Heart right ventricle (tissue), 16 donors: ENCODE measurements at regions of chr9 and their contacts with region 1.

Region 1: DNA sequence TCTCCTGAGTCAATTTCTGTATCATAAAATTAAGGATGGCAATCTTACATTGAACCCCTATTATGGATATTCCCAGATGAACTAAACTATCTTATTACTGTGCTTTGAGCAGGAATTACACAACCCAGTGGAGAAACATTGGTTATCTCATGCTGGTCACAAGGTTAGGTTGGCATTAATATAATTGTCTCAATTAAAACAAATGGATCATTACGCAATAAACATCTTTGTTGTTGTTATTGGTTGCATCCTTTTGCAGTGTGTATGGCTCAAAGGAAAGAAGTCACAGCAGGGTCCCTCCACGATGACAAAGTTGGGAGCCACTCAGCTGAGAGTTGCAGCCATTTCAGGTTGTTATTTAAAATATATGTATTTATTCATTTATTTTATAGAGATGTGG is 297.0 kb upstream of the KLF4 start:
- DNase-seq: no peak
- ATAC-seq: no peak
- H3K4me3 ChIP-seq: no peak overlapping the region
- H3K27ac ChIP-seq: no peak overlapping the region
- H3K4me1 ChIP-seq: peaks cover 2 to 28% (median 10%) of the 10 kb centered on the region in 9 donors
- H3K27me3 ChIP-seq: no peaks in the 10 kb centered on the region
- CTCF ChIP-seq: no peak

Region 2: DNA sequence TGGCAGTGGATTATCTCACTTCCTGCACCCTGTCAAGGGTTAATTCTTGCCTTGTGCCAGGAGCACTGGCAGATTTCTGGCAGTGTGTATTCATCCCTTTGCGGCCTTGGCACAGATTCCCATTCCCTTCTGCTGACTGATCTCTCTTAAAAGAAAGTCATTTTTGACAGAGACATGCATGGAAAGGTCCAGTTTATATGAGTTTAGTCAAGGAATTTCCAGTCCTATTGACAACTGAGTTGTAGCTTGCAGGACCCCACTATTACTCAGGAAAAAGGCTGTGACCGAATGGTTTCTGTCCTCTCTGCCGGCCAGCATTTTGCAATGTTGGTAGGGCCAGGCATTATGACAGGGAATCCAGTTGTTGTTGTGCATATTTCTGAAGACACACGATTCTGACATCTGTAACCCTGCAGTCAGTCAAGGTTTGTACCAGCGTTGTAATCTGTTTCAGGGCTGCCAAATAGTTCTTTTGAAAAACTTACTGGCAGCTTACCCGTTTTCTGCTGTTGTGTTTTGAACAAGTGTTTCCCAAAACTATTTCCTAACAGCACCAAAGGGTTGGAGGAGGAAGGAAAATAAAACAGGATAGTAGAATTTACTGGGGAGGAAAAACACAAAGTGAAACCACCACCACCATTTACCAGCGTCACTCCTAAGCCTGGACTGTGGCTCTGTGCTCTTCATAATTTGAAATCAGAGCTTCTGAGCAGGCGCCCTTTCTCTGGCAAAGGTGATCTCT is 53.6 kb before region 1 on chr9:
- intact Hi-C with region 1: loop called in 1 of 10 experiments (anchors 2 kb)
- DNase-seq: peak in 1 of 2 donors; percentile 49
- ATAC-seq: peak; percentile 50 to 81 (median 68)
- H3K4me3 ChIP-seq: peak overlapping the region in 8 of 10 donors; percentile 0 to 38 (median 18)
- H3K27ac ChIP-seq: peak overlapping the region; percentile 63 to 95 (median 84)
- H3K4me1 ChIP-seq: peaks cover 3 to 42% (median 28%) of the 10 kb centered on the region in 9 donors
- H3K27me3 ChIP-seq: no peaks in the 10 kb centered on the region
- CTCF ChIP-seq: no peak

Region 3: GRCh38 chr9:107954312-107954711 is 167.8 kb after region 1 on chr9:
- intact Hi-C with region 1: no loop called
- DNase-seq: no peak
- ATAC-seq: peak in 3 of 8 donors; percentile 47 to 75 (median 56)
- H3K4me3 ChIP-seq: no peak overlapping the region
- H3K27ac ChIP-seq: no peak overlapping the region
- H3K4me1 ChIP-seq: peaks cover 0 to 9% (median 0%) of the 10 kb centered on the region in 9 donors
- H3K27me3 ChIP-seq: no peaks in the 10 kb centered on the region
- CTCF ChIP-seq: no peak